Pancreas (tissue), 10 donors: ENCODE measurements at regions of chr9 and their contacts with region 1.

Region 1: DNA sequence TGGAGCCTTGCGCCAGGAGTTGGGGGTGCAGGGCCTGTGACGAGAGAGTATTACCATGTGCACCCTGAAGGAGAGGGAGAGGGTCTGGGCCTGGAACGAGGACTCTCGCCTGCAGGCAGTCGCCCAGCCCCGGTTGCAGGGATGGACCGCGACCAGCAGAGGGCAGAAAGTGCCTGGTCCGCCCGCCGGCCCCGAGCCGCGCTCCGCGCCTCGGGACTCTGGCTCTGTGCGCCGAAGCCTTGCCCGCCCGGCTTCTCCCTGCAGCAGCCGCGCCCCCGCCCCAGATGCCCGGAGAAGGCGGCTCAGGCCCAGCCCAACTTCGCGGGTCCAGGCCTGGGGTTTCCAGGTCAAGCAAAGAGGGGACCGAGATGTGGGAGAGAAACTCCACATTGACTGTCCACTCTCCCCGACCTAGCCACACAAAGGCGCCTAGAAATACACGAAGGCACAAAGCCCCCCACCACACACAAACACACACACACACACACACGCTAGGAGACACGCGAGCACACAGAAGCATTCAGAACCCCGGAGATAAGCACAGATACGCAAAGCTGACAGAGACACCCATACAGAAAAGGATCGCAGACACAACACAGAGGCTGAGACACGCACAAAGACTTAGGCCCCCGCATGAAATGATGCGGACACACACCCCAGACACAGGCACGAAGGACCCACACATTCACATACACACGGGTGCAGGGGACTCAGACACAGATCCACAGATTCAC is 2.0 kb upstream of the LMX1B start:
- DNase-seq: peak; percentile 71 to 93 (median 83)
- ATAC-seq: peak; percentile 86 to 96 (median 93)
- H3K4me3 ChIP-seq: peak overlapping the region in 1 of 4 donors; percentile 43
- H3K27ac ChIP-seq: no peak overlapping the region
- H3K4me1 ChIP-seq: peaks cover 0 to 12% (median 5%) of the 10 kb centered on the region in 3 donors
- H3K27me3 ChIP-seq: peaks cover 0 to 6% (median 0%) of the 10 kb centered on the region in 4 donors
- CTCF ChIP-seq: peak; percentile 78 to 93 (median 85)

Region 2: DNA sequence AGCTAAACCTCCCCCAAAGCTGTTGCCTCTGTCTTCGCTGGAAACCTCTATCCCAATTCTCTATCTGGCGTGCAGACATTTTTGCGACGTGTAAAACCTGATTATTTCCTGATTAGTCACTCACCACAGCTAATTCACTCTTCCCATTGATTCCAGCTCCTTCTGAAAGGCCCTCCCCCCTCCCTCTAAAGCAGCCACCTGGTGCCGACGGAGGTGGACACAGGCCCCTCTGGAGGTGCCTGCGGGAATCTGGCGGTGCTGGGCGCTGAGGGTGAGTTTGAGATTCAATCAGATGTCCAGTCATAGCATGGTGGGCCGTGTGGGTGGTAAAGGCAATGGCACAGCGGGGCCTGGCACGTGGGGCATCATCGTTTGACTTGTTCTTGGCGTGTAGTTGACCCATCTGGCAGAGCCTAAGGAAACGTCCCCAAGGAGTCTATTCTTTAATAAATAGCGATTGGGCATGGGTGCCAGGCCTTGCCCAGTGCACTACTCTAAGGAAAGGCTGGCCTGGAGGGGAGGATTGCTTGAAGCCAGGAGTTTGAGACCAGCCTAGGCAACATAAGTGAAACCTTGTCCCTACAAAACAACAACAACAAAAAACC is 556.3 kb before region 1 on chr9:
- intact Hi-C with region 1: no loop called
- DNase-seq: peak in 1 of 6 donors; percentile 26
- ATAC-seq: no peak
- H3K4me3 ChIP-seq: no peak overlapping the region
- H3K27ac ChIP-seq: no peak overlapping the region
- H3K4me1 ChIP-seq: no peaks in the 10 kb centered on the region
- H3K27me3 ChIP-seq: peaks cover 0 to 5% (median 0%) of the 10 kb centered on the region in 4 donors
- CTCF ChIP-seq: no peak

Region 3: GRCh38 chr9:126690431-126691350 is 78.9 kb after region 1 on chr9:
- intact Hi-C with region 1: loop called in 2 of 3 experiments (anchors 2 to 5 kb)
- DNase-seq: peak; percentile 43 to 87 (median 70)
- ATAC-seq: peak; percentile 76 to 91 (median 81)
- H3K4me3 ChIP-seq: no peak overlapping the region
- H3K27ac ChIP-seq: no peak overlapping the region
- H3K4me1 ChIP-seq: no peaks in the 10 kb centered on the region
- H3K27me3 ChIP-seq: no peaks in the 10 kb centered on the region
- CTCF ChIP-seq: peak; percentile 62 to 80 (median 70)

Region 4: DNA sequence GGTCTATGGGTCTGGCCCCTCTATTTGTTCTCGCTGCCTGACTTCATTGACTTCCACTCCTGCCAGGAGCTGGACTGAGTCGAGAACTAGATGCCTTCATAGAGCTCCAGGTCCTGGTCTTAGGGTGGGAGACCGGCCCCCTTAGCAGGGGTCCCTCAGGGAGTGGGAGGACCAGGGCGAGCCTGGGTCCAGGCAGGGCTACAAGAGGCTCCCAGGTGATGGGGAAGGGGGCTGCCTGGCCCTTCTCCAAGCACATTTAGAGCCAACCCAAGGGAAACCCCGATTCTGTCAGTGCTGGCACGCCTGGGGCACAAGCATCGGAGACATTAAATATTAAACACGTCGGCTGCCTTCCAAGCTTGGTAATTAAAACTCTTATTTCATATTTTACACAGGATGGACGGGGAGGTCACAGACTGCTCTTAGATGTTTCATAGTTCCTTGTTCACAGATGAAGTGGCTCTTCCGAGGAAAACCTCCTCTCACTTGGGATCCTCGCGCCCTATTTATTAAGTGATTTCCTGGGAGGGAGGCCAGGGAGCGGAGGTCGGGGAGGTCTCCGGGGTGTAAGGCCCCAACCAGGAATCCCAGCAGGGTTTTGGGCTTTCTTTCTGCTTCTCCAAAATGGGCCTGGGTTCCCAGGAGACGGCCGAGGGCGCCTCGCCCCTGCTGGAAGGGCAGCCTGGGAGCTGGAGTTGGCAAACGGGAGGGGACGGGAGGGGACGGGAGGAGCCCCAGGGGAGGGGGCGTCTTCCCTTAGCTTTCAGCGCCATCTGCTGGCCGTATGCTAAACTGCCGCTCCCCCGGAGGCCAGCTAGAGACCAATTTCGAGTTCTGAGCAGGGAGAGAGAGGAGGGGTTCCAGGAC is 169.7 kb after region 1 on chr9:
- intact Hi-C with region 1: loop called in 2 of 3 experiments (anchors 5 to 10 kb)
- DNase-seq: peak; percentile 66 to 96 (median 88)
- ATAC-seq: peak; percentile 91 to 98 (median 96)
- H3K4me3 ChIP-seq: no peak overlapping the region
- H3K27ac ChIP-seq: no peak overlapping the region
- H3K4me1 ChIP-seq: no peaks in the 10 kb centered on the region
- H3K27me3 ChIP-seq: no peaks in the 10 kb centered on the region
- CTCF ChIP-seq: peak; percentile 88 to 95 (median 92)

Region 5: DNA sequence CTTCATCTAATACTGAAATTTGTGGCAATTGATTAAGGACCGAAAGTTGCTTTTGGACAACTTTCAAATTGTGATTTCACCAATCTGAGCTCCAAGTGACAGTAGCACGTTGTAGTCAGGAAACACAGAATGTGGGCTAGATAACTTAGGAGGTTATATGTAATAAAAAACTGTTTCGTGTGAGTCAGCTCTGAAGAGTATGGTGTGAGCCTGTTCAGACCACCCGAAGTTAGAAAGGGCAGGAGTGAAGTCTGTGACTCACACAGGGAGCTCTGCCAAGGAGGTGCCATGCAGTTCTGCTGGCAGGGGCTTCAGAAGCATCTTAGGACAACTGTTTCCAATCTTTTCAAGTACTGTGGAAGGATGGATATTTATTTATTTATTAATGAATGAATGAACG is 232.3 kb after region 1 on chr9:
- intact Hi-C with region 1: no loop called
- DNase-seq: no peak
- ATAC-seq: peak in 3 of 4 donors; percentile 20 to 58 (median 56)
- H3K4me3 ChIP-seq: no peak overlapping the region
- H3K27ac ChIP-seq: peak overlapping the region in 2 of 4 donors; percentile 63 to 68
- H3K4me1 ChIP-seq: no peaks in the 10 kb centered on the region
- H3K27me3 ChIP-seq: no peaks in the 10 kb centered on the region
- CTCF ChIP-seq: no peak